ENCODE measurements at regions of chr4 and their contacts with region 1.

Region 1: DNA sequence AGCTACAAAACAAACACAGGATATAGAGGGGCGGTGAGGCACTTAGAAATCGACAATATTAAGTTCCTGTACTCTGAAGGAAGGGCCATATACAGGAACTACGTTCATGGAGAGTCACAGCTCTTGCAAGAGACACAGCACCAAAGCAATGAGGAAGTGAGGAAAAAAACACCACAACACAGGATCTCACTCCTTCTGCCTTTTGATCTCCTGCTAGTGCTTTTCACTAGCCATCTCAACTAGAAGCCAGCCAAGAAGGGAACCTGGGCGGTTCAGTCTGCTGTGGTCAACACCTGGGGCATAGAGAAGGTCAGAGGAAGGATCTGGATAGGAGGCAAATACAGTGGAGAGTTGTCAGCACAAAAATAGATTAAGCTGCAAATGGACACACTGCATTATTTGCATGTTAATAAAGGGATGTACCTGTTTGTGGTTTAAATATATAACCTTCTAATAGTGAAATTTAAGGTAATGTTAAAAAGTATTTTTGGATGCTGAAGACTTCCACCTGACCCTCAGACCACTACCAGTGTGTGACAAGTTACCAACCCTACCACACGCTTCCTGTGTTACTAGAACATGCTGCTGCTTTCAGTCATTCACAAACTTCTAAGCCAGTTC is 104.6 kb downstream of the DTHD1 start:
- DNase-seq: peak; percentile 46
- H3K4me3 Mint-ChIP-seq: peak overlapping the region; percentile 16
- H3K27ac Mint-ChIP-seq: peak overlapping the region; percentile 63
- H3K4me1 Mint-ChIP-seq: peaks cover 22% of the 10 kb centered on the region
- H3K27me3 Mint-ChIP-seq: no peaks in the 10 kb centered on the region

Region 2: DNA sequence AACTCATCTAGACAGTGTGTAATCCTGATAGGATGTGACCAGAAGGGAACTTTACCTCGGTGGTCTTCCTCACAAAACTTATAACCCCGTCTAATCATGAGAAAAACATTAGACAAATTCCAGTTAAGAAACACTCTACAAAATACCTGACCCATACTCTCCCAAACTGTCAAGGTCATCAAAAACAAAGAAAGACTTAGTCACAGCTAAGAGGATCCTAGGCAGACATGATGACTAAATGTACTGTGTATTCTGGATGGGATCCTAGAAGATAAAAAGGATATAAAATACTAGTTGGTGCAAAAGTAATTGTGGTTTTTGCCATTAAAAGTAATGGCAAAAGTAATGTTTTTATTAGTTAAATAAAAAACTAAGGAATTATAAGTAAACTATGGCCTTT is 23.0 kb before region 1 on chr4:
- CTCF ChIA-PET with region 1: no interaction called
- POLR2A ChIA-PET with region 1: no interaction called
- intact Hi-C with region 1: loop called (anchors 2 kb)
- DNase-seq: no peak
- H3K4me3 Mint-ChIP-seq: no peak overlapping the region
- H3K27ac Mint-ChIP-seq: no peak overlapping the region
- H3K4me1 Mint-ChIP-seq: peaks cover 7% of the 10 kb centered on the region
- H3K27me3 Mint-ChIP-seq: no peaks in the 10 kb centered on the region

Region 3: GRCh38 chr4:36638273-36638811 is 252.3 kb after region 1 on chr4:
- CTCF ChIA-PET with region 1: no interaction called
- POLR2A ChIA-PET with region 1: no interaction called
- intact Hi-C with region 1: no loop called
- DNase-seq: no peak
- H3K4me3 Mint-ChIP-seq: no peak overlapping the region
- H3K27ac Mint-ChIP-seq: no peak overlapping the region
- H3K4me1 Mint-ChIP-seq: no peaks in the 10 kb centered on the region
- H3K27me3 Mint-ChIP-seq: no peaks in the 10 kb centered on the region

Measured in activated CD4-positive, alpha-beta memory T cell treated with anti-CD3 and anti-CD28 coated beads for 36 hours (primary cell).